CD4-positive, alpha-beta T cell (primary cell): ENCODE measurements at regions of chr6 and their contacts with region 1.

Region 1: GRCh38 chr6:82270881-82271645 is 23.5 kb upstream of the IBTK start:
- DNase-seq: peak in 3 of 14 experiments; percentile 51 to 54 (median 52)
- ATAC-seq: no peak
- H3K4me3 ChIP-seq: no peak overlapping the region
- H3K4me3 Mint-ChIP-seq: no peak overlapping the region
- H3K27ac ChIP-seq: no peak overlapping the region
- H3K27ac Mint-ChIP-seq: no peak overlapping the region
- H3K4me1 ChIP-seq: no peaks in the 10 kb centered on the region
- H3K4me1 Mint-ChIP-seq: no peaks in the 10 kb centered on the region
- H3K27me3 ChIP-seq: no peaks in the 10 kb centered on the region
- H3K27me3 Mint-ChIP-seq: no peaks in the 10 kb centered on the region
- CTCF ChIP-seq: peak; percentile 76

Region 2: DNA sequence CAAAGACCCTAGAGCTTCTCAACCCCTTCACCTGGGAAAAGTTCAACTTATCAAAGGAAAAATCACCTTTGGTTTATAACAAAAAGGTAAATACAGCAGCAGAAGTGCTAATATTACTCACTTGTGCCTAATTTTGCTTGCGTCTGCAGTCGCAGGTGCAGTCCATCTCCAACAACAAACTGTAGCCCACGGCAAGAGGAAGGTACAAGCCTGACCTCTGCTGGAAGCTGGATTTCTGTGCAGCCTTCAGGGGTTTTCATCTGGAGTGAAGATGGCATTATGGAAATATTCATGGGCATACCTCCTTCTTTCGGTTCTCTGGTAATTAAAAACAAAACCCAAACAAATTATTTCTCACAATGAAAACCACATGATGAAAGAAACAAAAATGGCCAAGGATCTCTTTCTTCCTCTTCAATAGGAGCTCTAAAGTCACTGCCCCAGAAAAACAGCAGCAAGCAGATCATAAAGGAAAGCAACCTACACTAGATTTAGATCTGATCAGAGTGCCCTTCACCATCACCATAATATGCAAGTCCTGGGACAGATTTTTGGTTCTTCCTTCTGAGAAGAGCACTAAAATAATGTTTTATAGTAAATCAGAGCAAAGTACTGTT is 786.8 kb after region 1 on chr6:
- CTCF ChIA-PET with region 1: interaction called, 3 read pairs
- POLR2A ChIA-PET with region 1: no interaction called
- intact Hi-C with region 1: loop called (anchors 1 to 2 kb)
- DNase-seq: peak in 5 of 14 experiments; percentile 15 to 49 (median 35)
- ATAC-seq: peak; percentile 57
- H3K4me3 ChIP-seq: no peak overlapping the region
- H3K4me3 Mint-ChIP-seq: no peak overlapping the region
- H3K27ac ChIP-seq: no peak overlapping the region
- H3K27ac Mint-ChIP-seq: no peak overlapping the region
- H3K4me1 ChIP-seq: no peaks in the 10 kb centered on the region
- H3K4me1 Mint-ChIP-seq: peaks cover 12% of the 10 kb centered on the region
- H3K27me3 ChIP-seq: no peaks in the 10 kb centered on the region
- H3K27me3 Mint-ChIP-seq: no peaks in the 10 kb centered on the region
- CTCF ChIP-seq: peak; percentile 43

Region 3: DNA sequence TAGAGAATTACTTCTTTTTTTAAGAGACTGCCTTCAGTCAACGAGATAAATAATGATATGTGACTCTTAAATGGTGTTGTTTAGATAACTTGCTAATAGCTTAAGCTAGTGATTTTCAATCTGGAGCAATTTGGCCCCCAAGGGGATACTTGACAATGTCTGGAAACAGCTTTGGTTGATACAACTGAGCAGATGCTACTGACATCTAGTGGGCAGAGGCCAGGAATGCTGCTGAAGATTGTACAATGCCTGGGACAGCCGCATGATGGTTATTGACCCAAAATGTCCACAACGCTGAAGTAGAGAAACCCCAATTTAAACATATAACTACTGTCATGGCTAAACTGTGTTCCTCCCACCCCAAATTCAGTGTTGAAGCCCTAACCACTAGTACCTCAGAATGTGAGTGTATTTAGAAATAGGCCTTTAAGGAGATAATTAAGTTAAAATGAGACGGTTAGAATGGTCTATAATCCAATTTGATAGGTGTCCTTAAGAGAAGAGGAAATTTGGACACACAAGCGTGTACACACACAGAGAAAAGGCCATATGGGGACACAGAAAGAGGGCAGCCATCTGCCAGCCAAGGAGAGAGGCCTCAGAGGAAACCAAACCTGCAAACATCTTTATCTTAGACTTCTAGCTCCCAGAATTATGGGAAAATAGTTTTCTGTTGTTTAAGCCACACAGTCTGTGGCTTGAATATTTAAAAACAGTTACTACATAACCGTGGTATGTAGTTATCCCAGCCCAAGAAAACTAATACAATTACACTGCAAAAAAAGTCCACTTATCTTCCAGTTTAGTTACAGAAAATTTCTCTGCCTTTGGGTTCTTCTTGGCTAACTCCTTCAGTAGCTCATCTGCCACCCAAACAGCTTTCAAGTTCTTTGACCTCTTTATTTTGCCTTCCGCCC is 944.3 kb after region 1 on chr6:
- CTCF ChIA-PET with region 1: no interaction called
- POLR2A ChIA-PET with region 1: no interaction called
- intact Hi-C with region 1: loop called (anchors 5 to 10 kb)
- DNase-seq: peak in 13 of 14 experiments; percentile 23 to 78 (median 42)
- ATAC-seq: peak; percentile 98
- H3K4me3 ChIP-seq: no peak overlapping the region
- H3K4me3 Mint-ChIP-seq: no peak overlapping the region
- H3K27ac ChIP-seq: no peak overlapping the region
- H3K27ac Mint-ChIP-seq: no peak overlapping the region
- H3K4me1 ChIP-seq: no peaks in the 10 kb centered on the region
- H3K4me1 Mint-ChIP-seq: no peaks in the 10 kb centered on the region
- H3K27me3 ChIP-seq: peaks cover 0 to 4% of the 10 kb centered on the region in 2 experiments
- H3K27me3 Mint-ChIP-seq: peaks cover 11% of the 10 kb centered on the region
- CTCF ChIP-seq: peak; percentile 83

Region 4: DNA sequence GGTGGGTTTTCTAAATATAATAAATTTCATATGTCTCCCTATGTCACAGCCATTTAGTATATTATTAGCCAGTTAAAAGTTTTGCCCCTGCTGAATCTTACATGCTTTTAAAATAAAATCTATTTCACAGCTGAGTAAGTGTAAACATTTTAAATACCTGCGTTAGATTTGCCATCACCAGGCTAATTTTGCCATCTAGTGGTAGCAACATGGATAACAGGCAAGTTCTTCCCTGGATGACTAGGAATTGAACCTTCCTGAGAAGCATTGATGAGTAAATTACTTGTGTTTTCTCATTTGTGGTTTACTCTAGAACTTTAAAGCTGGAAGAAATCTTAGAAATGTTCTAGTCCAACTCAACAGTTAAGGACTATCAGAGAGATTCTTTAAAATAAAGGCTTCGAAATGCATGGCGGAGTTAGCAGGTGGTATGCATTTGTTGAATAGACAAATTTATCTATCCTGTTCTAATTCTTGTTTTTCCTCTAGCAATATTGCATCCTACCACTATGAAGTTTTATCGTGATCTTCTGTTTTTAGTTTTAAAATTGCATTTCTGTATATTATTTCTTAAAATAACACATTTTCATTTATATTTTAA is 1243.9 kb after region 1 on chr6:
- CTCF ChIA-PET with region 1: no interaction called
- POLR2A ChIA-PET with region 1: no interaction called
- intact Hi-C with region 1: loop called (anchors 2 to 5 kb)
- DNase-seq: peak in 3 of 14 experiments; percentile 41 to 58 (median 54)
- ATAC-seq: no peak
- H3K4me3 ChIP-seq: no peak overlapping the region
- H3K4me3 Mint-ChIP-seq: no peak overlapping the region
- H3K27ac ChIP-seq: no peak overlapping the region
- H3K27ac Mint-ChIP-seq: no peak overlapping the region
- H3K4me1 ChIP-seq: peaks cover 4% of the 10 kb centered on the region
- H3K4me1 Mint-ChIP-seq: peaks cover 6% of the 10 kb centered on the region
- H3K27me3 ChIP-seq: peaks cover 10 to 26% of the 10 kb centered on the region in 2 experiments
- H3K27me3 Mint-ChIP-seq: peaks cover 64% of the 10 kb centered on the region
- CTCF ChIP-seq: peak; percentile 66